Posterior vena cava (tissue), 2 donors: ENCODE measurements at regions of chr2 and their contacts with region 1.

Region 1: GRCh38 chr2:96514521-96514920 is 9.4 kb upstream of the NEURL3 start:
- DNase-seq: peak; percentile 26

Region 2: DNA sequence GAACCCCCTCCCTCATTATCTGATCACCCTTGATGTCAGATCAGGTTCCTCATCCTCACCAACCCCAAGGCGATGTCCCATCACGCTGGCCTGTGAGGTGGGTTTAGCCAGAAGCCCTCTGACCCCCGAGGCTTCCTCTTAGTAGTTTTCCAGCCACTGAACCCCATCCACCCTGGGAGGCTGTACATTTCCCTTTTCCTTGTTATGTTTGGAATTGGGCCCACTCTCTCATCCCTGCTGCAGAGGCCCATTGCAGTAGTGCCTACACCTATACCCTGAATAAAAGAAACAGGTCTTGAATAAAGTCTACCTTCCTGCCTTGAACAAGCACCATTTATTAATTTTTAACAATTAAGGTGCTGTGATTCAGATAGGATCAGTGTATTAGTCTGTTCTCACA is 98.8 kb before region 1 on chr2:
- intact Hi-C with region 1: no loop called
- DNase-seq: no peak

Region 3: DNA sequence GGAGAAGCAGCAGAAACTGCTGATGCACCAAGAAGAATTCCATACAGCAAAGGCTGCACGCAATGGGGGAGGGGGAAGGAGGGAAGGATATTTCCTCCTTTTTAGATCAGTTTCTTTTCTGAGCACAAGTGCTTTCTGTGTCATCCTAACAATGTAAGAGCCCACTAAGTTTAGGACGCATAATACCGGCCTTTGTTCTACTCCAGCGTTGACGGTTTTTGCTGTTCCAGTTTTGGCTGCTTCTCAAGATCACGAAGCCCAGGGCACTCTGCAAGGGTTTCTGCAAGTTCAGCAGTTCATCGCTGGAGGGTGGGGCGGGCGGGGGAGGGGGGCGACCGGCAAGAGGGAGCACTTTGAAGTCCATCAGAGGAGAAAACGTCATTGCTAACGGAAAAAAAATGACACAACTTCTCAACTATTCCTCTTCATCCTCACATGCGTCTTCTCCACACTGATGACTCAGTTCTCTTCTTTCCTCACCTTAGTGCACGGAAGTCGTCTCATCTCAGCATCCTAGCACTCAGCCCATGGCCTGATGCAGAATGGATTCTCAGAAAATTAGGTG is 463.2 kb after region 1 on chr2:
- intact Hi-C with region 1: no loop called
- DNase-seq: no peak

Region 4: DNA sequence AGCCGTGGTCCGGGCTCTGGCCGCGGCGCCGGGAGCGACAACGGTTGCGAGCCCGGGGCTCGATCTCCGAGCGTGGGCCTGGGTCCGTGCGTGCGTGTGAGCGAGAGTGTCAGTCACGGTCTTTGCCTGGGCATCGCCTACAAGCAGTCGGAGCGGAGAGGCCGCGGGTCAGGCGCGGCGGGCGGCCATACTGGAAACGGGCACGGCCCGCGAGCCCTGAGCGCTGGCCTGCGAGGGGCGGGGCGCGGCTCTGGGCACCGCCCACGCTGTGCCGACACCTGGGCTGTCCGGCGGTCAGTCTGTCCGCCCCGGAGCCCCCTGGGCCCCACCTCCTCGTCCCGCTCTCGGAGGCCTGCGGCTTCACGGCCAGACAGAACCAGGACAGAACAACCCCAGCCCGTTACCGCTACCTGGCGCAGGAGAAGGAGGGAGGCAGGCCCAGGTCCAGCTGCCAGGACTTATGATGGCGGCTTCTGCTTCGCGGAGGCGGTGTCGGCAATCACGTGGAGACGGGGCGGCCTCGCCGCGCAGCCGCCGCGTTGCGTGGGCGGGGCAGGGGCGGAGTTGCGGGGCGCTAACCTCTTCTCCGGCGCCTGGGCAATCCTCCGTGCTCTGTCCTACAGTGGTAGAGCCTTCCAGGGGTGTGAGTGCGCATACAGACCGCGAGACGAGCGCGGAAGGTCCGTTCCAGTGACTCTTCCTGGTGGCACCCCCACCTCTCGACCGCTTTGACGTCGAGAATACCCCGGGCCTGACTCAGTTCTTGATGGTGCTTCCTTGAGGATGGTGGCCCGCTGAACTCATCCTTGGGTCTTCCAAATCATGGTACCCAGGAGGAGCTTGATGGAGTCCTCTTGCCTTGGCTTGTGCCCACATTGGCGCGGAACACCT is 1481.5 kb after region 1 on chr2 and contains the start of gene TMEM131:
- intact Hi-C with region 1: loop called in 1 of 2 experiments (anchors 5 kb)
- DNase-seq: peak; percentile 99
- total RNA-seq, gene TMEM131: 37.7 to 37.8 TPM